Breast epithelium (tissue), 4 donors: ENCODE measurements at regions of chr11 and their contacts with region 1.

Region 1: GRCh38 chr11:31619980-31620379 is 110.4 kb downstream of the ELP4 start:
- DNase-seq: no peak
- H3K4me3 ChIP-seq: no peak overlapping the region
- H3K27ac ChIP-seq: no peak overlapping the region
- H3K4me1 ChIP-seq: no peaks in the 10 kb centered on the region
- H3K27me3 ChIP-seq: no peaks in the 10 kb centered on the region
- CTCF ChIP-seq: no peak
- POLR2A ChIP-seq: no peak

Region 2: GRCh38 chr11:32213223-32213622 is 593.2 kb after region 1 on chr11:
- intact Hi-C with region 1: loop called (anchors 10 kb)
- DNase-seq: no peak
- H3K4me3 ChIP-seq: no peak overlapping the region
- H3K27ac ChIP-seq: no peak overlapping the region
- H3K4me1 ChIP-seq: no peaks in the 10 kb centered on the region
- H3K27me3 ChIP-seq: peaks cover 0 to 4% of the 10 kb centered on the region in 2 donors
- CTCF ChIP-seq: no peak
- POLR2A ChIP-seq: no peak